ENCODE measurements at regions of chr20 and their contacts with region 1.

Region 1: GRCh38 chr20:41232973-41233926 is 84.3 kb downstream of the ZHX3 start:
- DNase-seq: peak in 1 of 9 experiments; percentile 6
- ATAC-seq: no peak
- H3K4me3 ChIP-seq: no peak overlapping the region
- H3K4me3 Mint-ChIP-seq: no peak overlapping the region
- H3K27ac ChIP-seq: no peak overlapping the region
- H3K27ac Mint-ChIP-seq: no peak overlapping the region
- H3K4me1 ChIP-seq: peaks cover 12% of the 10 kb centered on the region
- H3K4me1 Mint-ChIP-seq: peaks cover 23% of the 10 kb centered on the region
- H3K27me3 ChIP-seq: no peaks in the 10 kb centered on the region
- H3K27me3 Mint-ChIP-seq: no peaks in the 10 kb centered on the region
- CTCF ChIP-seq: no peak

Region 2: GRCh38 chr20:40970201-40970600 is 263.0 kb before region 1 on chr20:
- CTCF ChIA-PET with region 1: interaction called, 4 read pairs
- POLR2A ChIA-PET with region 1: no interaction called
- intact Hi-C with region 1: loop called (anchors 1 kb)
- DNase-seq: peak in 1 of 9 experiments; percentile 44
- ATAC-seq: no peak
- H3K4me3 ChIP-seq: no peak overlapping the region
- H3K4me3 Mint-ChIP-seq: no peak overlapping the region
- H3K27ac ChIP-seq: no peak overlapping the region
- H3K27ac Mint-ChIP-seq: no peak overlapping the region
- H3K4me1 ChIP-seq: no peaks in the 10 kb centered on the region
- H3K4me1 Mint-ChIP-seq: peaks cover 7% of the 10 kb centered on the region
- H3K27me3 ChIP-seq: no peaks in the 10 kb centered on the region
- H3K27me3 Mint-ChIP-seq: peaks cover 3% of the 10 kb centered on the region
- CTCF ChIP-seq: no peak

Region 3: DNA sequence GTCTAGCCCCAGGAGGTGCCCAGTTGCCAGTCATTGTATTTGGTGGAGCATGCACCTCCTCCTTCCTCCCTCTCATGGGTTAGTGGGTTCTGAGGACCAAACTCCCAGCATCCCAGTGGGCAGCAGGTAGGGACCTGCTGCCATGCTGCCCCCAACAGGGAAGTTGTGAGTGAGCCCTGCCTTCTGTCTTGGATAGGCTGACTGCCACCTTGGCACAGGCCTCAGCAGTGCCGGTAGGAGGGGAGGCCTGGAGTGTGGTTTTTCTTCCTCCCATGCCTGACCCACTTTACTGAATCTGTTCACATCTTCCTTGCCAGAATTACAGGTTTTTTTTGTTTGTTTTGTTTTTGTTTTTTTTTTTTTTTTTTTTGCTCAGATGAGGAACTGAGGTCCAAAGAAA is 71.4 kb before region 1 on chr20:
- CTCF ChIA-PET with region 1: interaction called, 11 read pairs
- POLR2A ChIA-PET with region 1: interaction called, 4 read pairs
- intact Hi-C with region 1: no loop called
- DNase-seq: peak in 3 of 9 experiments; percentile 25 to 49 (median 45)
- ATAC-seq: no peak
- H3K4me3 ChIP-seq: no peak overlapping the region
- H3K4me3 Mint-ChIP-seq: peak overlapping the region; percentile 58
- H3K27ac ChIP-seq: peak overlapping the region; percentile 39 to 82
- H3K27ac Mint-ChIP-seq: peak overlapping the region; percentile 92
- H3K4me1 ChIP-seq: peaks cover 88% of the 10 kb centered on the region
- H3K4me1 Mint-ChIP-seq: peaks cover 86% of the 10 kb centered on the region
- H3K27me3 ChIP-seq: no peaks in the 10 kb centered on the region
- H3K27me3 Mint-ChIP-seq: no peaks in the 10 kb centered on the region
- CTCF ChIP-seq: no peak

Region 4: GRCh38 chr20:41173161-41173721 is 60.0 kb before region 1 on chr20:
- CTCF ChIA-PET with region 1: interaction called, 23 read pairs
- POLR2A ChIA-PET with region 1: no interaction called
- intact Hi-C with region 1: loop called (anchors 1 kb)
- DNase-seq: peak; percentile 22 to 83 (median 71)
- ATAC-seq: peak; percentile 93
- H3K4me3 ChIP-seq: no peak overlapping the region
- H3K4me3 Mint-ChIP-seq: no peak overlapping the region
- H3K27ac ChIP-seq: peak overlapping the region in 1 of 2 experiments; percentile 29
- H3K27ac Mint-ChIP-seq: peak overlapping the region; percentile 81
- H3K4me1 ChIP-seq: peaks cover 21% of the 10 kb centered on the region
- H3K4me1 Mint-ChIP-seq: peaks cover 43% of the 10 kb centered on the region
- H3K27me3 ChIP-seq: no peaks in the 10 kb centered on the region
- H3K27me3 Mint-ChIP-seq: no peaks in the 10 kb centered on the region
- CTCF ChIP-seq: peak; percentile 74

Region 5: GRCh38 chr20:41218466-41218865 is 14.8 kb before region 1 on chr20:
- CTCF ChIA-PET with region 1: interaction called, 10 read pairs
- POLR2A ChIA-PET with region 1: no interaction called
- intact Hi-C with region 1: no loop called
- DNase-seq: no peak
- ATAC-seq: no peak
- H3K4me3 ChIP-seq: no peak overlapping the region
- H3K4me3 Mint-ChIP-seq: no peak overlapping the region
- H3K27ac ChIP-seq: no peak overlapping the region
- H3K27ac Mint-ChIP-seq: no peak overlapping the region
- H3K4me1 ChIP-seq: no peaks in the 10 kb centered on the region
- H3K4me1 Mint-ChIP-seq: no peaks in the 10 kb centered on the region
- H3K27me3 ChIP-seq: no peaks in the 10 kb centered on the region
- H3K27me3 Mint-ChIP-seq: no peaks in the 10 kb centered on the region
- CTCF ChIP-seq: no peak

Region 6: GRCh38 chr20:41317536-41318270 is 84.5 kb after region 1 on chr20 and contains the start of gene ZHX3:
- CTCF ChIA-PET with region 1: no interaction called
- POLR2A ChIA-PET with region 1: interaction called, 3 read pairs
- intact Hi-C with region 1: loop called in 1 of 2 experiments (anchors 5 kb)
- DNase-seq: peak; percentile 93 to 99 (median 97)
- ATAC-seq: peak; percentile 95
- H3K4me3 ChIP-seq: peak within 1 kb of the TSS; percentile 67 to 85
- H3K4me3 Mint-ChIP-seq: peak within 1 kb of the TSS; percentile 80
- H3K27ac ChIP-seq: peak within 1 kb of the TSS; percentile 47 to 57
- H3K27ac Mint-ChIP-seq: peak within 1 kb of the TSS; percentile 57
- H3K4me1 ChIP-seq: peaks cover 11% of the 10 kb centered on the region
- H3K4me1 Mint-ChIP-seq: peaks cover 28% of the 10 kb centered on the region
- H3K27me3 ChIP-seq: no peaks in the 10 kb centered on the region
- H3K27me3 Mint-ChIP-seq: no peaks in the 10 kb centered on the region
- CTCF ChIP-seq: no peak
- total RNA-seq, gene ZHX3: 4.4 to 4.7 TPM